ENCODE measurements at regions of chr16 and their contacts with region 1.

Region 1: GRCh38 chr16:87586201-87586782 is 16.0 kb upstream of the JPH3 start:
- DNase-seq: no peak
- H3K4me3 ChIP-seq: no peak overlapping the region
- H3K27ac ChIP-seq: no peak overlapping the region
- H3K4me1 ChIP-seq: peaks cover 0 to 38% (median 36%) of the 10 kb centered on the region in 4 donors
- H3K27me3 ChIP-seq: peaks cover 0 to 18% of the 10 kb centered on the region in 2 donors
- CTCF ChIP-seq: no peak

Region 2: GRCh38 chr16:87661561-87661960 is 75.3 kb after region 1 on chr16:
- intact Hi-C with region 1: no loop called
- DNase-seq: no peak
- H3K4me3 ChIP-seq: no peak overlapping the region
- H3K27ac ChIP-seq: no peak overlapping the region
- H3K4me1 ChIP-seq: no peaks in the 10 kb centered on the region
- H3K27me3 ChIP-seq: peaks cover 0 to 64% of the 10 kb centered on the region in 2 donors
- CTCF ChIP-seq: no peak

Region 3: GRCh38 chr16:87765776-87766484 is 179.6 kb after region 1 on chr16 and contains the start of gene KLHDC4:
- intact Hi-C with region 1: loop called (anchors 5 kb)
- DNase-seq: peak; percentile 87 to 93
- H3K4me3 ChIP-seq: peak within 1 kb of the TSS; percentile 68 to 86
- H3K27ac ChIP-seq: peak within 1 kb of the TSS; percentile 79 to 89
- H3K4me1 ChIP-seq: peaks cover 0 to 21% (median 15%) of the 10 kb centered on the region in 4 donors
- H3K27me3 ChIP-seq: no peaks in the 10 kb centered on the region
- CTCF ChIP-seq: no peak